Tibial artery (tissue), 4 donors: ENCODE measurements at regions of chr2 and their contacts with region 1.

Region 1: DNA sequence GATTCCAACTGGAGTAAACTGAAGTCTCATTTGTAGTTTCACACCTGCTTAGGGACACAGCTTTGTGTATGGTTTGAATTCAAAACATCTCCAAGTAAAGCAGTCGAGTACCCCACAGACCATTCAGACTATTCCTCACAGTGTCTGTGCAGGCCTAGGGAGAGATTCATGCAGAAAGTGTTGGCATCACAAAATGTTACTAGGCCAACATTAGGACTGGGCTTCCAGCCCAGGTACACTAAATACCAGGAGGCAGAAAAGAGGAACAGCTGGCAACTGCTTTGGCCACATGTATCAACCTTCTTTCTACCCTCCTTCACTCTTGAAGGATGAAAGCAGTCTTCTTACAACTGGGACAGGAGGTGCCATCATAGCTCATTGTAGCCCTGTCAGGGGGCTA is 270.4 kb upstream of the TMEFF2 start:
- DNase-seq: no peak
- H3K4me3 ChIP-seq: no peak overlapping the region
- H3K27ac ChIP-seq: no peak overlapping the region
- H3K4me1 ChIP-seq: no peaks in the 10 kb centered on the region
- H3K27me3 ChIP-seq: no peaks in the 10 kb centered on the region
- CTCF ChIP-seq: no peak

Region 2: GRCh38 chr2:190507135-190507534 is 1958.0 kb before region 1 on chr2:
- intact Hi-C with region 1: no loop called
- DNase-seq: no peak
- H3K4me3 ChIP-seq: no peak overlapping the region
- H3K27ac ChIP-seq: no peak overlapping the region
- H3K4me1 ChIP-seq: no peaks in the 10 kb centered on the region
- H3K27me3 ChIP-seq: no peaks in the 10 kb centered on the region
- CTCF ChIP-seq: no peak

Region 3: DNA sequence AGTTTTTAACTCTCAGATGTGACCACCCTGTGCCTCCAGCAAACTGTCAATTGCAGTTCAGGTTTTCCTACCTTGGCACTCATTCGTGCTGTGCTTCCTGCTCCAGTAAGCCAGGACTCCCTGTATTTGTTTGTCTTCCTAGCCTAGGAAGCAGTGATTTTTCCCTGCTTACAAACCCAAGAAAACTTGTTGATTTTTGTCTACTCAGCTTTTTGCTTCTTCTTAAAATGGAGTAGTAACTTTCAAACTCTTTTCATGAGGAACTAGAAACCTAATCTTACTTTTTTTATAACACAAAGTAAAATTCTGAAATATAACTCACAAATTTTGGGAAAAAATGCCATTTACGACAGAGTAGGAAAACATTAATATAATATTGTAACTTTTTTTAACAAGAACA is 119.9 kb before region 1 on chr2:
- intact Hi-C with region 1: no loop called
- DNase-seq: no peak
- H3K4me3 ChIP-seq: no peak overlapping the region
- H3K27ac ChIP-seq: no peak overlapping the region
- H3K4me1 ChIP-seq: no peaks in the 10 kb centered on the region
- H3K27me3 ChIP-seq: no peaks in the 10 kb centered on the region
- CTCF ChIP-seq: no peak

Region 4: DNA sequence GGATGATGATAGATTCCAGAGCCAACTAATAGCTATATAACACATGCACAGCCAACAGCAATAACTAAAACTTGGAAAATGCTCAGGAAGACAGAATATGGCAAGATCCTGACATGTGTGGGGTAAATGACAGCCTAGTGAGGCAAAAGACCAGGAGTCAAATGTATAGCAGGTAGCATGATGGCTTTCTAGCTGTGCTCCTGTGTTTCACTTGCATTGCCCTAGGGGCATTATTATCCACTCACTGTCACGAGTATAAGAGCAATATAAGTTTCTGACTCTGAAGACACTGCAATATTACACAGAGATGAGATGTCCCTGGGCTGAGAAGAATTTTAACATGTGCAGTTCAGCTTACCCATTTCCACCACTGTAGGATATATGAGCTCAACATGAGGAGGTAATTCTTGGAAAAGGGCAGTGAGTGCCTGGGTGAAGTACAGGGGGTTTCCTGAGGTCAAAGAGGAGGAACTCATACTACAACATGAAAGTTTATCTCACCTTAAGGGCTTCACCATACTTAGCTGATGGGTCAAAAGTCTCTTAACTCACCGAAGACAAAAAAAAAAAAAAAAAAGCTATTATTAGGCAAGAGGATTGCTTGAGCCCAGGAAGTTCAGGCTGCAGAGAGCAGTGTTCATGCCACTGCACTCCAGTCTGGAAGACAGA is 1806.3 kb after region 1 on chr2:
- intact Hi-C with region 1: loop called (anchors 5 kb)
- DNase-seq: no peak
- H3K4me3 ChIP-seq: no peak overlapping the region
- H3K27ac ChIP-seq: no peak overlapping the region
- H3K4me1 ChIP-seq: no peaks in the 10 kb centered on the region
- H3K27me3 ChIP-seq: no peaks in the 10 kb centered on the region
- CTCF ChIP-seq: no peak